Left cardiac atrium (tissue), 4 donors: ENCODE measurements at regions of chr20 and their contacts with region 1.

Region 1: GRCh38 chr20:47989721-47990421 is 204.6 kb upstream of the SULF2 start:
- DNase-seq: no peak
- ATAC-seq: no peak

Region 2: DNA sequence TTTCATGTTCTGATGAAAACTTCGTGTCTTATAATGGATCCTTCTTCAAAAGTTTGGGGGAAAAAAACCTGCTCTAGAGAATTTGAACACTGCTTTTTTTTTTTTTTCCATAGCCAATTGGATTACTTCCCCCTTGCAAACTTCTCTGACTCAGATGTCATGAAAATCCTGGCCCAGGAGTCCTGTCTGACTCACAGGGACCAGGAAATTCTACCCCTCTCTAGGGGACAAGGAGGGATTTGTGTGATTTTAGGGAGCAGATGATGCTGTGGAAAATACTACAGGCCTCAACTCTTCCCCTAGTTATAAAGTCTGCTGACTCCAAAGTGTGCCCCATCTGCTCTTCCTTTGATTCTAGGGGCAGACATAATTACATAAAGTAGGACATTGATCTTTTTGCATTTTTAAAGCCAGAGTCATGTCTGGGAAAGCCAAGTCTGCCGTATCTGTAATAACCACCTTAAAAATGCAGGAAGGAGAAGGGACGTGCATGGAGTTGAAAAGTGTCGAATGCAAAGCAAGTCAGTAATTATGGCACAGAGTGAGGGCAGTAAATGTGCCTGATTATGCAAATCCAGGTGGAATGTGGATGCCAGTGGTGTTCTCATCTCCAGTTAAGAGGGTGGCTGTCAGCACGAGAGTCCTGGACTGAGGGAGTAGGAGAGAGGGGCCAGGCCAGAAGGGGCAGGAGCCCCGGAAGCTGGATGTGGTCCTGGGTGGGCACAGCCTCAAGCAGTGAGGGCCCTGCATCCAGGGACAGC is 60.3 kb before region 1 on chr20:
- intact Hi-C with region 1: loop called in 1 of 2 experiments (anchors 10 kb)
- DNase-seq: no peak
- ATAC-seq: peak in 1 of 2 donors; percentile 57

Region 3: GRCh38 chr20:48846498-48847485 is 856.9 kb after region 1 on chr20:
- intact Hi-C with region 1: no loop called
- DNase-seq: peak; percentile 31
- ATAC-seq: peak in 1 of 2 donors; percentile 23